ENCODE measurements at regions of chr10 and their contacts with region 1.

Region 1: GRCh38 chr10:69418052-69418752 is 1.5 kb upstream of the TACR2 start:
- DNase-seq: peak; percentile 48
- H3K4me3 ChIP-seq: no peak overlapping the region
- H3K27ac ChIP-seq: peak overlapping the region; percentile 69 to 94 (median 84)
- H3K4me1 ChIP-seq: peaks cover 19 to 42% (median 32%) of the 10 kb centered on the region in 4 donors
- H3K27me3 ChIP-seq: no peaks in the 10 kb centered on the region
- CTCF ChIP-seq: no peak
- EP300 ChIP-seq: no peak
- POLR2A ChIP-seq: no peak

Region 2: DNA sequence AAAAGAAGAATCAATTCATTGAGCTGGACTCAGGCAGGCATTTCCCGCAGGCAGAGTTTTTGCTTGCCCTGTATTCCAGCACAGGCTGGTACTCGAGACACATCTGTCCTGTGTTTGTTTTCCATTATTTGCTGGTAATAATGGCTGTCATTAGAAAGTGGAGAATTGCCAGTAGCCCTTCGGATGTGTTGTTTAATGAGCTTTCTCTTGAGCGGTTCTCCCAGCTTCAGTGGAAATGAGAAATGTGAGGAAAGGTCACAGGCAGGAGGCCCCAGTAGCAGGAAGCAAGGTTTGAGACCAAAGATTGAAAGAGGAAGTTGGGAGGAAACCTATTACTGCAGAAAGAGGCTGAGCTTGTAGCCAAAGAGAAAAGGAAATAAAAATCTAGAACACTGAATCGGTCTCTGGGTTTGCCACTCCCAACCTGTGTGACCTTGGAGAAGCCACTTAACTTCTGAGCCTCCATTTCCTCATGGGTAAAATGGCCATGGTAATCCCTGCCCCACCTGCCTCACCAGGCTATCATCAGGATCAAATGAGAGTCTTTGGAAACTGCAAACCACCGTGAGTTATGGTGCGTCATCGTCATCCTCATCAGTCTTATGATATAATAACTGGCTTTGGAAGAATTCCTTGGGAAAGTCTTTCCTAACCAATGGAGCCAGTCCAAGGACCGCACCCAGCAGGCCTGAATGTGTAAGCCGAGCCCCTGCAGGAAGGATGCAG is 69.2 kb before region 1 on chr10:
- in situ Hi-C with region 1: no loop called
- intact Hi-C with region 1: no loop called
- DNase-seq: peak; percentile 58
- H3K4me3 ChIP-seq: no peak overlapping the region
- H3K27ac ChIP-seq: peak overlapping the region; percentile 69 to 81 (median 76)
- H3K4me1 ChIP-seq: peaks cover 9 to 53% (median 43%) of the 10 kb centered on the region in 4 donors
- H3K27me3 ChIP-seq: no peaks in the 10 kb centered on the region
- CTCF ChIP-seq: no peak
- EP300 ChIP-seq: no peak
- POLR2A ChIP-seq: no peak

Region 3: GRCh38 chr10:69494626-69495558 is 76.7 kb after region 1 on chr10:
- in situ Hi-C with region 1: loop called in 3 of 4 experiments (anchors 5 to 10 kb)
- intact Hi-C with region 1: loop called (anchors 5 kb)
- DNase-seq: no peak
- H3K4me3 ChIP-seq: no peak overlapping the region
- H3K27ac ChIP-seq: peak overlapping the region; percentile 53 to 79 (median 75)
- H3K4me1 ChIP-seq: peaks cover 5 to 29% (median 16%) of the 10 kb centered on the region in 4 donors
- H3K27me3 ChIP-seq: no peaks in the 10 kb centered on the region
- CTCF ChIP-seq: no peak
- EP300 ChIP-seq: no peak
- POLR2A ChIP-seq: no peak

Region 4: DNA sequence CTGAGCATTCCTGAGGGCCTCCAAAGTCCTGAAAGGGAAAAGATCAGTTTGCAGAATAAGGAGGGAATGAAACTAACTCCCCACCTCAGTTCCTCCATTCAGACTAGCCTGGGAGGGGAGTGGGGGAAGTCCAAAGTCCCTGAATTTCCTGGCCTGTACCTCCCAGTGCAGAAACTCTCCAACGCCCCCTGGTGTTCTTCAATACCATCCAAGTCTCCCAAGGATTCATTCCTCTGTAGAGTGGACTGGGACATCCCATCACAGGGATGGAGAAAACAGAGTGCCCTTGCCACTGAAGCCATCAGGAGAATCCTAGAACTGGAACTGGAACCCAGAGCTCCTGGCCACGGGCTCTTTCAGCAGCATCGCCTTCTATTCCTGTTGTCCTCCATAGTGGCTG is 381.9 kb after region 1 on chr10:
- in situ Hi-C with region 1: no loop called
- intact Hi-C with region 1: loop called (anchors 5 kb)
- DNase-seq: peak; percentile 51
- H3K4me3 ChIP-seq: no peak overlapping the region
- H3K27ac ChIP-seq: no peak overlapping the region
- H3K4me1 ChIP-seq: peaks cover 0 to 25% (median 19%) of the 10 kb centered on the region in 4 donors
- H3K27me3 ChIP-seq: peaks cover 37% of the 10 kb centered on the region
- CTCF ChIP-seq: peak; percentile 45 to 58 (median 54)
- EP300 ChIP-seq: no peak
- POLR2A ChIP-seq: no peak

Measured in transverse colon (tissue), 4 donors.